ENCODE measurements at regions of chrX and their contacts with region 1.

Region 1: DNA sequence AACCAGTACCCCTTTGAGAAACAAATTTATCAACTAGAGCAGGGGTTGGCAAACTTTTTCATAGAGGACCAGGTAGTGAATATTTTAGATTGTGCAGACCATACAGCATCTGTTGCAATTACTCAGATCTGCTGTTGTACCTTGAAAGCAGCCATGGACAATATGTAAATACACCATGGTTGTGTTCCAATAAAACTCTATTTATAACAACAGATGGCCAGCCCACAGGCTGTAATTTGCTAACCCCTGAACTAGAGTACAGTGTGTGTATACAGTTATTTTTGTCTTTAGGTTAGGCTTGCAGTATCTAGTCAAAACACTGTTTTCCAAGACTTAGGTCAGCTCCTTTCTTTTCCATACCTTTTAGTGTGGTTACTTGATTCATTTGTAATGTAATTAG is 54.4 kb downstream of the PHKA1 start:
- DNase-seq: no peak
- H3K4me3 ChIP-seq: no peak overlapping the region
- H3K27ac ChIP-seq: no peak overlapping the region
- H3K4me1 ChIP-seq: no peaks in the 10 kb centered on the region
- H3K27me3 ChIP-seq: no peaks in the 10 kb centered on the region
- CTCF ChIP-seq: no peak
- POLR2A ChIP-seq: no peak

Region 2: GRCh38 chrX:72727846-72728245 is 68.1 kb after region 1 on chrX:
- intact Hi-C with region 1: no loop called
- DNase-seq: no peak
- H3K4me3 ChIP-seq: no peak overlapping the region
- H3K27ac ChIP-seq: no peak overlapping the region
- H3K4me1 ChIP-seq: no peaks in the 10 kb centered on the region
- H3K27me3 ChIP-seq: no peaks in the 10 kb centered on the region
- CTCF ChIP-seq: no peak
- POLR2A ChIP-seq: no peak

Region 3: DNA sequence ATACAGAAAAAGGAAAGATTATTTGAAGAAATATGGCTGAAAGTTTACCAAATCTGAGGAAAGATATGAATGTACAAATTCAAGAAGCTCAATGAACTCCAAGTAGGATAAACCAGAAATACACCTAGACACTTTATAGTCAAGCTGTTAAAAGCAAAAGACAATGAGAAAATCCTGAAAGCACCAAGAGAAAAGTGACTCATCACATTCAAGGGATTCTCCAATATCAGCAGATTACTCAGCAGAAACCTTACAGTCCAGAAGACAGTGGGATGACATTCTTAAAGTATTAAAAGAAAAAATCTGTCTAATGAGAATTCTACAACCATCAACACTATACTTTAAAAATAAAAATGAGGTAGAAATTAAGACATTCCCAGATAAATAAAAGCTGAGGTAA is 1420.4 kb after region 1 on chrX:
- intact Hi-C with region 1: loop called (anchors 5 kb)
- DNase-seq: no peak
- H3K4me3 ChIP-seq: no peak overlapping the region
- H3K27ac ChIP-seq: no peak overlapping the region
- H3K4me1 ChIP-seq: no peaks in the 10 kb centered on the region
- H3K27me3 ChIP-seq: no peaks in the 10 kb centered on the region
- CTCF ChIP-seq: no peak
- POLR2A ChIP-seq: no peak